Astrocyte of the cerebellum (primary cell): ENCODE measurements at regions of chr5 and their contacts with region 1.

Region 1: DNA sequence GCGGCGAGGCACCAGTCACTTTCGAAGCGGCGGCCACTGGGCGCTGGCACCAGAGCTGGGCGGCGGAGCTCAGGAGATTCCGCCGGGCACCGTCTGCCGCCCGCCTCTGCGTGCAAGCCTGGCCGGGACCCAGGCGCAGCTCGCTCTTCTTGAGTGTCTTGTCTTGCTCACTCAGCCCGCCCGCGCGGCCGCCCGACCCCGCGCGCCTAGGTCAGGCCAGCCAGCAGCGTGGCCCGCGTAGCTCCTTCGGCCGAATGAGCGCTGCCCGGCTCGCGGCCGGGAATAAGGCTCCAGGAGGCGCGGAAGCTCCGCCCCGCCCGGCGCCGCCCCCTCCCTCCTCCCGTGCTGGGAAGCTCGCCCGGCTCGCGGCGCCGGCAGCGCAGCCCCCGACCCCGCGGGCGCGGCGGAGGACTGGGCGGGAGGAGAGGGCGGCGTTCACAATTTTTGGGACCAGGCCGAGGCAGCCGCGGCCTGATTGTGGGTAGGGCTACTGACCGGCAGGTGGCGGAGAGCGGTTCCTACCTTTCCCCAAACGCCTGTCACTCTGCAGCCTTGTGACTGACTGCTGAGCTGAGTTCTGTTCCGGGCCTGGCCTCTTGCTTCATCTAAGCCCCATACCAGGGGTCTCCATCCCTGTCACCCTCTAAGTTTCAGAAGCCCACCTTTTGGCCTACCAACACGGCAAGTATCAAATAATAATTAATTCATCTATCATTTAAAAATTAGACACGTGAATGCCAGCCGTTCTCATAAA is at the start of gene HBEGF:
- DNase-seq: peak; percentile 39
- H3K4me3 ChIP-seq: peak within 1 kb of the TSS; percentile 55
- CTCF ChIP-seq: peak; percentile 46

Region 2: DNA sequence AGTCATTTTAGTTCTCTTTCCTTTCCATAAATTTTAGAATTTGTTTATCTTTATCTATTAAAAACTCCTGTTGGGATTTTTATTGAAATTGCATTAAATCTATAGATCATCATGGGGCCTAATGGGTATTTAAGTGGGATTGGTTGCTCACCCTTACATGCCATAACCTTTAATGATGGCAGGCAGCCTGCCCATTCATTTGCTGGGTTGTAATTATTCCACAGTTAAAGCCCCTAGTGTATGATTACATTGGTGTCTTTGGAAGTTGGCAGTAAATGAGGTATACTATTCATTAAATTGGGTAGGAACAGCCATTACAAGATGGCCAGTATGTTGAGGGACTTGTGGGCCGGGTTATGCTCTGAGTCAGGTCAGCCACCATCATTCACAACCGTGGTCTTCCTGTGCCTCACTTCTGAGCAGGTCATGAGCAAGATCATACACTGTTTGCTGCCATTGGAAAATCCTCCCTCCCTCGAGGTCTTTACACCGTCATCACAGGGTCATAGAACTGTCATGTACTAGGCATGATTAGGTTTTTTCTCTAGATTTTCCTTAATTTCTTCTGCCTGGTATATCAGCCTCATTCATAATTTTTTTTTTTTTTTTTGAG is 112.0 kb before region 1 on chr5:
- in situ Hi-C with region 1: loop called (anchors 5 kb)
- DNase-seq: no peak
- H3K4me3 ChIP-seq: no peak overlapping the region
- CTCF ChIP-seq: no peak

Region 3: GRCh38 chr5:140261403-140262171 is 84.9 kb before region 1 on chr5:
- in situ Hi-C with region 1: loop called (anchors 5 kb)
- DNase-seq: peak; percentile 75
- H3K4me3 ChIP-seq: no peak overlapping the region
- CTCF ChIP-seq: no peak

Region 4: GRCh38 chr5:140312067-140312790 is 34.3 kb before region 1 on chr5:
- in situ Hi-C with region 1: loop called (anchors 5 kb)
- DNase-seq: peak; percentile 94
- H3K4me3 ChIP-seq: no peak overlapping the region
- CTCF ChIP-seq: no peak